Activated T-helper 2 cell treated with anti-CD3 and anti-CD28 coated beads, Interferon-gamma antibody, Interleukin-2, Interleukin-4, amounts not matched to agents 10 μg/mL and 5 μg/mL and 100 μg/mL, durations not matched to agents 14 hours and 24 hours and 36 hours (primary cell): ENCODE measurements at regions of chr3 and their contacts with region 1.

Region 1: GRCh38 chr3:49021813-49022687 is at the start of gene NDUFAF3:
- DNase-seq: peak; percentile 91
- H3K4me3 Mint-ChIP-seq: peak within 1 kb of the TSS; percentile 95
- H3K27ac Mint-ChIP-seq: peak within 1 kb of the TSS; percentile 96
- H3K4me1 Mint-ChIP-seq: peaks cover 29% of the 10 kb centered on the region
- H3K27me3 Mint-ChIP-seq: no peaks in the 10 kb centered on the region
- total RNA-seq, gene NDUFAF3: 118 and 120 TPM in 2 replicates

Region 2: GRCh38 chr3:48372862-48373435 is 649.1 kb before region 1 on chr3:
- intact Hi-C with region 1: no loop called
- DNase-seq: no peak
- H3K4me3 Mint-ChIP-seq: no peak overlapping the region
- H3K27ac Mint-ChIP-seq: no peak overlapping the region
- H3K4me1 Mint-ChIP-seq: no peaks in the 10 kb centered on the region
- H3K27me3 Mint-ChIP-seq: peaks cover 12% of the 10 kb centered on the region

Region 3: GRCh38 chr3:48478596-48479555 is 543.2 kb before region 1 on chr3:
- intact Hi-C with region 1: no loop called
- DNase-seq: peak; percentile 68
- H3K4me3 Mint-ChIP-seq: peak overlapping the region; percentile 77
- H3K27ac Mint-ChIP-seq: peak overlapping the region; percentile 94
- H3K4me1 Mint-ChIP-seq: peaks cover 30% of the 10 kb centered on the region
- H3K27me3 Mint-ChIP-seq: no peaks in the 10 kb centered on the region

Region 4: DNA sequence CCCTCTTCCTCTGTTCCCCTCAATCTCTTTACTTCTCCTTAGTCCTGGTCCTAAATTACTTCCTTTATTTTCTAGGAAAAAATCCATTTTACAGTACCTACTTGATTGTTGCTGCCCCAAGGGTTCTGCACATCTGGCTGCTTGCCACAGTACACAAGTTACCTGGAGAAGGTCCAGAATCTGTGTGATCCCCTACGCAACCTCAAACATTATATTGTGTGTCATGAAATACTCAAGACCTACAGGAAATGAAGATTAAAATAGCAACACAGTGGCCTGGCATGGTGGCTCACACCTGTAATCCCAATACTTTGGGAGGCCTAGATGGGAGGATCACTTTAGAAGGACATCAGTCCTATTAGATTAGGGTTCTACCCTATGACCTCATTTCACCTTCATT is 223.1 kb before region 1 on chr3:
- intact Hi-C with region 1: no loop called
- DNase-seq: no peak
- H3K4me3 Mint-ChIP-seq: no peak overlapping the region
- H3K27ac Mint-ChIP-seq: no peak overlapping the region
- H3K4me1 Mint-ChIP-seq: no peaks in the 10 kb centered on the region
- H3K27me3 Mint-ChIP-seq: no peaks in the 10 kb centered on the region

Region 5: DNA sequence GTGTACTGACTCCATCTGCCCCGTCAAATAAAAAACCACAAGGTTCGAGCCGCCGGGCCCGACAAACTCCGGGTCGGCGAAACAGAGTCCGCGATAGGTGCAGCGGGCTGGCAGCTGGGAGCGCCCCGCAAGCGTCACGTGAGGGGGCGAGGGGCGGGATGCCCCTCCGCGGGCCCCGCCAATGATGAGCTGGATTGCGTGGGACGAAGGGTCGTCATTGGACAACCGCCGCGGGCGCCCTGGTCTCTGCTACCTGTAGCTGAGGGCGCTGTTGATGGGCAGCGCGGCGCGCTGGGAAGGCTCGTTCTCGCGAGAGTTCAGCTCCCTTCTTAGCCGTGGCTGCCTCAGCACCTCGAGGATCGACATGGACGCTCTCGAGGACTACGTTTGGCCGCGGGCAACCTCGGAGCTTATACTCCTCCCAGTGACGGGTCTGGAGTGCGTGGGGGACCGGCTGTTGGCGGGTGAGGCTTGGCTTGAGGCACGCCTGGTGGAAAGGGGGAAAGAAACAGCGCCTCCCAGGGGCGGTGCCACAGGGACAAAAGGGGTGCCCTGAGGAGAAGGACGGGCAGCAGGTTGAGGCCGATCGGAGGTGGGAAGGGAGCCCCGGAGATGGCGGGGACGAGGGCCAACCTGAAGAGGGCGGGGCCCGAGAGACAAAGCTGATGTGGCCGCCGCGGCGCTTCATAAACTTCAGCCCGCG is 14.8 kb before region 1 on chr3 and contains the start of gene WDR6:
- intact Hi-C with region 1: loop called (anchors 1 kb)
- DNase-seq: peak; percentile 96
- H3K4me3 Mint-ChIP-seq: peak within 1 kb of the TSS; percentile 98
- H3K27ac Mint-ChIP-seq: peak within 1 kb of the TSS; percentile 99
- H3K4me1 Mint-ChIP-seq: peaks cover 15% of the 10 kb centered on the region
- H3K27me3 Mint-ChIP-seq: no peaks in the 10 kb centered on the region
- total RNA-seq, gene WDR6: 161 and 167 TPM in 2 replicates